Activated T-helper 1 cell treated with anti-CD3 and anti-CD28 coated beads, Interleukin-12 subunit alpha, Interleukin-12 subunit beta, Interleukin-2, Interleukin-4 antibody, amounts not matched to agents 30 ng/mL and 10 ng/mL and 1 ng/mL, durations not matched to agents 14 hours and 24 hours and 36 hours (primary cell): ENCODE measurements at regions of chr3 and their contacts with region 1.

Region 1: DNA sequence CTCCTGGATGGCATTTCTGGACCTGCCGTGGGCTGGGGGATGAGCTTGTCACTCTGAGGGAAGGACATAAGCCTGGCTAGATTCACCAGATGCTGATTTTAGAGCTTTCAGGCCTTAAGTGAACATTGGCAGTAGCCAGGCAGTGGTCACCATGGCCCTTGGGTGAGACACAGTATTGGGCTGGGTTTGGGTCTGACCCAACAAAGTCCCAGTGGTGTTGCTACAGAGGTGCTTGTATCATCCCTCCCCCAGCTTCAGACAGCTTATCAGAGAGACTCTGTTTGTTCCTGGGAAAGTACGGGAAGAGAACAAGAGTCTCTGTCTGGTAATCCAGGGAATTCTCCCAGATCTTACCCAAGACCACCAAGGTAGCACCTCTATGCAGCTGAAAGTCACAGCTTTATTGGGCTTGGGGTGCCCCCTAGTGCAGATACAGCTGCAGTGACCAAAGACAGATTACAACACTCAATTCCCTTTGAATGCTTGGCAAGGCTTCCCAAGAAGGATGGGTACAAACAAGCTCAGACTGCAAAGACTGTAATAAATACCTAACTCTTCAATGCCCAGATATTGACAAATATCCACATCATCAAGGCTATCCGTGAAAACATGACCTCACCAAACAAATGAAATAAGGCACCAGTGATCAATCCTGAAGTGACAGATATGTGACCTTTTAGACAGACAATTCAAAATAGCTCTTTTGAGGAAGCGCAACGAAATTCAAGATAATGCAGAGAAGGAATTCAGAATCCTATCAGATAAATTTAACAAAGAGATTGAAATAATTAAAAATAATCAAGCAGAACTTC is 9.9 kb upstream of the RUVBL1 start:
- DNase-seq: peak; percentile 28
- H3K4me3 Mint-ChIP-seq: no peak overlapping the region
- H3K27ac Mint-ChIP-seq: no peak overlapping the region
- H3K4me1 Mint-ChIP-seq: no peaks in the 10 kb centered on the region
- H3K27me3 Mint-ChIP-seq: peaks cover 32% of the 10 kb centered on the region

Region 2: DNA sequence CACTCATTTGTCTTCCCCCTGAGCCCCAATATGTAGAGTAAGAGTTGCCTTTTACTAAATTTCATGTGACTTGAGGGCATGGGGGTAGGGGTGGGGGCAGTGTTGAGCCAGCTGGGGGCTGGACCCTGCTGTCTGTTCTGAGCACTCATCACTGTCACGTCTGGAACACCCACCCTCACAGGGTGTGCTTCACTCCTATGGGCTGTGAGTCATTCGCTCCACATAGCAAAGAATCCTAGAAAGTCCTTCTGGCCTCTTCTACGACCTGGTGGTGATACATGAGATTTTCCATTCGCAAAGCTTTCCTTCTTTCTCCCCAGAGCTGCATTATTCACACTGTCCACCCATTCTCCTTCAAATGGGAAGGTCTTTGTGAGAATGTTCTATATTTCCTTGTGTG is 267.5 kb before region 1 on chr3:
- intact Hi-C with region 1: no loop called
- DNase-seq: no peak
- H3K4me3 Mint-ChIP-seq: no peak overlapping the region
- H3K27ac Mint-ChIP-seq: no peak overlapping the region
- H3K4me1 Mint-ChIP-seq: peaks cover 5% of the 10 kb centered on the region
- H3K27me3 Mint-ChIP-seq: peaks cover 9% of the 10 kb centered on the region

Region 3: DNA sequence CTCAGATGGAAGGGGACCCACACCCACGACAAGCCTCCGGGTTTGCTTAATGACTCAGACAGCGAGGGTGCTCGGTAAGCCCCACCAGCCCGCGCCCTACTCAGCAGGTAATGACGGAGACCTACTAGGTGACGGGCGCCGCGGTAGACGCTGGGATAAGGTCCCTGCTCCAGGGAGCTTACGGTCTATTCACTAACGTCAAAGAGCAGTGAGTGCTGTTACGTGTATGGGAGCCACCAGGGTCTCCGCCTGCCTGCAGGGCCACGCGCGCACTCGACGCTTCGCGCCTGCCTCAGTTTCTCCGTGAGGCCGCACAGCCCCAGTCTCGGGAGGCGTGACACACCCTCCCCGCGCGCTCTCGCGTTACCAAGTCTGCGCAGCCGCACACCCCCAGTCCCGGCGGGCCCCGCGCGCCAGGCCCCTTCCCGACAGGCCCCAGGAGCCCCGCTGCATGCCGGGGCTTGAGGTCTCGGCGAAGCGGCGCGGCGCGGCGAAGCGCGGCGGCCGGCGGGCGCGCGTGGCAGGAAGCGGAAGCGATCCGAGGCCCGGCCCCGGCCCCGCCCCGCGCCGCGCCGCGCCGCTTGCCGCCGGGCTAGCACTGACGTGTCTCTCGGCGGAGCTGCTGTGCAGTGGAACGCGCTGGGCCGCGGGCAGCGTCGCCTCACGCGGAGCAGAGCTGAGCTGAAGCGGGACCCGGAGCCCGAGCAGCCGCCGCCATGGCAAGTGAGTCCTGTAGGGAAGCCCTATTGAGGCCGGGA is 81.5 kb before region 1 on chr3 and contains the start of gene SEC61A1:
- intact Hi-C with region 1: no loop called
- DNase-seq: peak; percentile 96
- H3K4me3 Mint-ChIP-seq: peak within 1 kb of the TSS; percentile 99
- H3K27ac Mint-ChIP-seq: peak within 1 kb of the TSS; percentile 96
- H3K4me1 Mint-ChIP-seq: peaks cover 43% of the 10 kb centered on the region
- H3K27me3 Mint-ChIP-seq: peaks cover 6% of the 10 kb centered on the region
- total RNA-seq, gene SEC61A1: 205 and 214 TPM in 2 replicates

Region 4: GRCh38 chr3:128075516-128076482 is 57.7 kb before region 1 on chr3:
- intact Hi-C with region 1: loop called (anchors 2 kb)
- DNase-seq: peak; percentile 76
- H3K4me3 Mint-ChIP-seq: peak overlapping the region; percentile 62
- H3K27ac Mint-ChIP-seq: no peak overlapping the region
- H3K4me1 Mint-ChIP-seq: peaks cover 7% of the 10 kb centered on the region
- H3K27me3 Mint-ChIP-seq: peaks cover 10% of the 10 kb centered on the region

Region 5: DNA sequence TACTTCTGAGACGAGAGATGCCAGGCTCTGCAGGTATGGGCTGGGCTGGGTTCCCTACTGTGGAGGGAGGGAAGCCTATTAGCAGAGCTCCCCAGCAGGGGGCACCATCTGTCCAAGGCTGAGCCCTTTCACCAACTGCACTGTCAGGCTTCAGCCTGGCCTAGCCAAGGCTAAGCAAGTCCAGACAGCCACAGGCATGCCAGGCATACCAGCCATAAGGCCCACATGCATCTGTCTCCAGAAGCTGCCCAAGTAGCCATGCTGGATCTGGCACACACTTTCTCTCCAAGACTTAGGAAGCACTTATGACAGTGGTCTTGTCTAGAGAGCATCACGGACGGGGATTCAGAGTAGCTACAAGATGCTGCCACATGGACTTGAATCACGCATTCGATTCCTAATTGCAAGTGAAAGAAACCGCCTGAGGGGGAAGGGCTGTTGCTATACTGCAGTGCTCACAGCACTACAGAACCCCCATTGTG is 38.2 kb before region 1 on chr3:
- intact Hi-C with region 1: loop called (anchors 1 kb)
- DNase-seq: peak; percentile 66
- H3K4me3 Mint-ChIP-seq: no peak overlapping the region
- H3K27ac Mint-ChIP-seq: no peak overlapping the region
- H3K4me1 Mint-ChIP-seq: peaks cover 19% of the 10 kb centered on the region
- H3K27me3 Mint-ChIP-seq: no peaks in the 10 kb centered on the region